HEK293 (cell line): ENCODE measurements at regions of chr11 and their contacts with region 1.

Region 1: GRCh38 chr11:34250732-34251639 is 106.8 kb downstream of the ABTB2 start:
- H3K4me3 ChIP-seq: peak overlapping the region; percentile 6; the same call in 1 of the 2 replicates
- H3K27ac ChIP-seq: no peak overlapping the region
- H3K4me1 ChIP-seq: no peaks in the 10 kb centered on the region; the same call in 1 of the 2 replicates
- CTCF ChIP-seq: no peak

Region 2: GRCh38 chr11:34044664-34045485 is 206.1 kb before region 1 on chr11:
- CTCF ChIA-PET with region 1: no interaction called
- POLR2A ChIA-PET with region 1: no interaction called
- H3K4me3 ChIP-seq: no peak overlapping the region
- H3K27ac ChIP-seq: no peak overlapping the region
- H3K4me1 ChIP-seq: no peaks in the 10 kb centered on the region
- CTCF ChIP-seq: no peak

Region 3: DNA sequence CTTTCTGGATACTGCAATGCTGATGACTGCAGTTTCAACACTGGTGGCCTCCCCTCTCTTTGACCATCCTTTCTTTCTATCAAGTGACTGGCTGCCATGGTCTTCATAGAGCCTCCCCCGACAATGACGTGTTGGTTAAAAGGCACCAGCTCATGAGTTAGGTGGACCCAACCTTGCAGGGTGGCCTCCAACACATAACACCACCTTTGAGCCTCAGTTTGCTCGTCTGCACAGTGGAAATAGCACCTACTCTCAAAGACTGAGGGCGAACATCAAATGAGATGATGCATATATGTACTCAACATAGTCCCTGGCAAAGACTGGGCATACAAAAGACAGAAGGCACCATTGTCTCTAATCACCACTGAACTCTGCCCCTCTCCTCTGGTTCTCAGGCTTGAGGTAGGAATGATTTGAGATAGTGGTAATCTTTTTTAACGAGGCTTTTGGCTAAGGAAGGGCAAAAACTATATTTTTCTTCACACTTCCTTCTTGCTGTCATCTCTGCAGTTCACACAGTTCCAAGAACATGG is 26.5 kb before region 1 on chr11:
- CTCF ChIA-PET with region 1: no interaction called
- POLR2A ChIA-PET with region 1: interaction called, 10 read pairs
- H3K4me3 ChIP-seq: no peak overlapping the region
- H3K27ac ChIP-seq: no peak overlapping the region
- H3K4me1 ChIP-seq: peaks cover 5% of the 10 kb centered on the region
- CTCF ChIP-seq: no peak